Activated naive CD4-positive, alpha-beta T cell treated with anti-CD3 and anti-CD28 coated beads for 36 hours (primary cell): ENCODE measurements at regions of chr3 and their contacts with region 1.

Region 1: DNA sequence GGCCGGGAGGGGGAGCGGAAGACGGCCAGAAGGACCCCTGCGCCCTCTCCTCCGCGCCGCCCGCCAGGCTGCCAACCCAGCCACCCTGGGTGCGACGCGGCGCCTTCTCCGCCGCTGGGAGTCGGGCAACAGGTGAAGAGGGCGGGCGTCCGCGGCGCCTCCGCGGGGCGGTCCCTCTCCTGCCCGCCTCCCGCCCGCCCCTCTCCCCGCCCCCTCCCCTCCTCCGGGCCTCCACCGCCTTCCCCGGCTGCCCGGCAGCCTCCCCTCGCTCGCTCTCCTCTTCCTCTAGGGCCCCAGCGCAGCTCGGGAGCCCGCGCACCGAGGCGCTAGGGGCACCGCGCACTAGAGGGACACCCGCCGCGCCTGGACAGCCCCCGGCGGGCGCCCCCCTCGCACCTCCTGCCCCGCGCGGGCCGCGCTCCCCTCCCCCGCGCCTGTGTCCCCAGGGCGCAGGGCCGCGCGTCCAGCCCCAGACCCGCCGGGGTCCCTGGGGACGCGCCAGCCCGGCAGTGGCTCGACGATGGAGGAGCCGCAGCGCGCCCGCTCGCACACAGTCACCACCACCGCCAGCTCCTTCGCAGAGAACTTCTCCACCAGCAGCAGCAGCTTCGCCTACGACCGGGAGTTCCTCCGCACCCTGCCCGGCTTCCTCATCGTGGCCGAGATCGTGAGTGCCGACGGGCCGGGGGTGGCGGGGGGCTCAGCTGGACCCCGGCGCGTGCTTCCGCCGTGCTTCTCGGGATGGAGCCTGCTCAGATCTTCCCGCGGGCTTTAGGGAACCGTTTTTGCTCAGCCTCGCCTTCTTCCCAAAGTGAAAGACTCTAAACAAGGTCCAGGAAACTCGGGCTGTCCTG is at the start of gene CMTM8:
- DNase-seq: peak; percentile 70
- H3K4me3 Mint-ChIP-seq: peak within 1 kb of the TSS; percentile 82
- H3K27ac Mint-ChIP-seq: no peak within 1 kb of the TSS
- H3K4me1 Mint-ChIP-seq: peaks cover 32% of the 10 kb centered on the region
- H3K27me3 Mint-ChIP-seq: peaks cover 2% of the 10 kb centered on the region
- total RNA-seq, gene CMTM8: 16.0 to 19.1 TPM

Region 2: GRCh38 chr3:32106280-32106928 is 132.3 kb before region 1 on chr3 and contains the start of gene GPD1L:
- CTCF ChIA-PET with region 1: no interaction called
- intact Hi-C with region 1: loop called (anchors 2 kb)
- DNase-seq: peak; percentile 92
- H3K4me3 Mint-ChIP-seq: peak within 1 kb of the TSS; percentile 96
- H3K27ac Mint-ChIP-seq: peak within 1 kb of the TSS; percentile 46
- H3K4me1 Mint-ChIP-seq: peaks cover 30% of the 10 kb centered on the region
- H3K27me3 Mint-ChIP-seq: no peaks in the 10 kb centered on the region
- total RNA-seq, gene GPD1L: 10.8 to 12.6 TPM

Region 3: DNA sequence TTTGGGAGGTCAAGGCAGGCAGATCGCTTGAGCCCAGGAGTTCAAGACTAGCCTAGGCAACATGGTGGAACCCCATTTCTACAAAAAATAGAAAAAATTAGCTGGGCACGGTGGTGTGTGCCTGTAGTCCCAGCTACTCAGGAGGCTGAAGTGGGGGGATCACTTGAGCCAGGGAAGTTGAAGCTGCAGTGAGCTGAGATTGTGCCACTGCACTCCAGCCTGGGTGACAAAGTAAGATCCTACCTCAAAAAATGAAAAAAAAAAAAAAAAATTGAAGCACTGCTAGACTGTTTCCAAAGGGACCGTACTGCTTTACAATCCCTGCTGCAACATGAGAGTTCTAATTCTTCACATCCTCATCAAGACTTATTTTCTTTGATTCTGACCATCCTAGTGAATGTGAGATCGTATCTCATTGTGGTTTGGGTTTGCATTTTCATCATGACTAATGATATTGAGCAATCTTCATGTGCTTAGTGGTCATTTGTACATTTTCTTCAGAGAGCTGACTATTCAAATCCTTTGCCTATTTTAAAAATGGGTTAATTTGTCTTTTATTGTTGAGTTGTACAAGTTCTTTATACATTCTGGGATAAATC is 10.6 kb after region 1 on chr3:
- CTCF ChIA-PET with region 1: interaction called, 13 read pairs
- intact Hi-C with region 1: no loop called
- DNase-seq: no peak
- H3K4me3 Mint-ChIP-seq: no peak overlapping the region
- H3K27ac Mint-ChIP-seq: no peak overlapping the region
- H3K4me1 Mint-ChIP-seq: peaks cover 31% of the 10 kb centered on the region
- H3K27me3 Mint-ChIP-seq: no peaks in the 10 kb centered on the region

Region 4: DNA sequence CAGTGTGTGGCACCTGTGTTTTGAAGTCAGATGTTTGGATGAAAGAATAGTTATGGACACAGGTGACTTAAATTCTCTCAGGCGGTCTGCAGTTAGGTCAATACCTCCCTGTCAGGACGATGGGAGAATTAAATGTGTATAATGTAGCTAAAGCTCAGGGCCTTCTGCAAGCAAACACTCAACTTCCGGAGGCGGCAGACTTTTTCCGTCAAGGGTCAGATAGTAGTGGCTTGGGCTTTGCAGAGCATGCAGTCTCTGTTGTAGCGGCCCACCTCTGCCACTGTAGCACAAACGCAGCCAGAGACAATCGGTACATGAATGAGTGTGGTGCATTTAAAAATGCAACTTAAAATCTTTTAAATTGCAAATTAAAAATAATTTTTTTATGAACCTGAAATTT is 47.2 kb after region 1 on chr3:
- CTCF ChIA-PET with region 1: interaction called, 27 read pairs
- intact Hi-C with region 1: loop called (anchors 2 kb)
- DNase-seq: peak; percentile 20
- H3K4me3 Mint-ChIP-seq: peak overlapping the region; percentile 11
- H3K27ac Mint-ChIP-seq: peak overlapping the region; percentile 38
- H3K4me1 Mint-ChIP-seq: peaks cover 40% of the 10 kb centered on the region
- H3K27me3 Mint-ChIP-seq: no peaks in the 10 kb centered on the region

Region 5: GRCh38 chr3:32570421-32571191 is 331.9 kb after region 1 on chr3 and contains the start of gene DYNC1LI1:
- CTCF ChIA-PET with region 1: no interaction called
- intact Hi-C with region 1: loop called (anchors 5 kb)
- DNase-seq: peak; percentile 94
- H3K4me3 Mint-ChIP-seq: peak within 1 kb of the TSS; percentile 88
- H3K27ac Mint-ChIP-seq: peak within 1 kb of the TSS; percentile 88
- H3K4me1 Mint-ChIP-seq: peaks cover 19% of the 10 kb centered on the region
- H3K27me3 Mint-ChIP-seq: no peaks in the 10 kb centered on the region
- total RNA-seq, gene DYNC1LI1: 29.8 to 33.1 TPM

Region 6: DNA sequence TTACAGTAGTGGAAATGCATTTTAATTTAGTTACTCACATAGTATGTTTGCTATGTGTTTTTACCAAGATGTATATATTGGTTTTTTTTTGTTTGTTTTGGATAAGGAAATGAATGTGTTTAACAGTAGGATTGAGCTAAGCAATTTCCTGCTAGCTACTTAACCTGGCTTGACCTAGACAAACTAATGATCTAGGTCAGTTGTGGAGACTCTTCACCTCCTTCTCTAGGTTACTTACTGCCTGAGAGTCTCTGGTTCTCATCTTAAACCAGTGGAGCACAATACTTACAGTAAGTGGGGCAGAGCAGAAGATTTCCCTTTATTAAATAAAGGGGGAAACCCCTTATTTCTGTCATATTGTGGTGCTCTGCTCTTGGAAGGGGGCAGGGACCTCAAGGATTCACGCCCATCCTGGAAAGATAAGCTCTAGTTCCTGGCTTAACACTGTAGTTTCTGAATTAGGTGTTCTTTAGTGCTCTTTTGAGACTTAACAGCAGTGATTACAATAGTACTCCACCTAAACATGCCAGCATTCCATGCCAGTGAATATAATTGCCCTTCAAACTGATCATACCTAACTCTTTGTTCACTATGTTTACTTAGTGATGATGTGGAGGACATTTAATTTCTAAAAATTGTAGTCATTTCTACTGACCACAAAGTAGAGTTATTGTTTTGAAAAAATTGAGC is 1121.6 kb after region 1 on chr3:
- CTCF ChIA-PET with region 1: no interaction called
- intact Hi-C with region 1: no loop called
- DNase-seq: no peak
- H3K4me3 Mint-ChIP-seq: no peak overlapping the region
- H3K27ac Mint-ChIP-seq: no peak overlapping the region
- H3K4me1 Mint-ChIP-seq: no peaks in the 10 kb centered on the region
- H3K27me3 Mint-ChIP-seq: peaks cover 7% of the 10 kb centered on the region